ENCODE measurements at regions of chr5 and their contacts with region 1.

Region 1: DNA sequence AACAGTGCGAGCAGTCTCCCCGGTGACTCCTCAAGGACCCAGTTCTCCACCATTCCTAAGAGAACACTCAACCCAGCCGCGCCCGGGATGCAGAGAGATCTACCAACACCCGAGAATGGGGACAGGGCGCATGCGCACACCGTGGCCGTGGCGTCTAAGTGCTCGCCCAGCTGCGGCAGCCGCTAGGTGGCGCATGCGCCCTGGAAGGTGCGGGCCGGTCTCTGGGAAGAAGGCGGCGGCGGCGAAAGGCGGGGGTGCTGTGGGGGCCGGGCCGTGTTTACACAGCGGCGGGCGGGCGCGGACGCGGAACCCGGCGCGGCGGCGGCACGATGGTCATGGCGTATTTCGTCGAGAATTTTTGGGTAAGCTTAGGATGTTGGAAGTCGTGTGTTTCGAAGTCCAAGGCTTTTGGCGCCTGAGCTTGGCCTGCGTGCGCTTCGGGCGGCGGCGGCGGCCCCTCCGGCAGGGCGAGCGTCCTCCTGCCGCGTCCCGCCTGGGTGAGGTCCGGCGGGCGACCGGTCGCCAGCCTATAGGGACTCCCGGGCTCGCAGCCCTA is at the start of gene FCHO2:
- DNase-seq: peak; percentile 90
- ATAC-seq: peak; percentile 90
- H3K4me3 ChIP-seq: peak within 1 kb of the TSS; percentile 65 to 93 (median 86)
- H3K27ac ChIP-seq: peak within 1 kb of the TSS; percentile 89
- H3K4me1 ChIP-seq: peaks cover 58% of the 10 kb centered on the region
- H3K27me3 ChIP-seq: no peaks in the 10 kb centered on the region; a peak in 1 of 5 replicates
- CTCF ChIP-seq: peak; percentile 96
- EP300 ChIP-seq: no peak
- POLR2A ChIP-seq: peak; percentile 70 to 82
- RAD21 ChIP-seq: peak; percentile 78
- total RNA-seq, gene FCHO2: 11.6 and 12.7 TPM in 2 replicates

Region 2: DNA sequence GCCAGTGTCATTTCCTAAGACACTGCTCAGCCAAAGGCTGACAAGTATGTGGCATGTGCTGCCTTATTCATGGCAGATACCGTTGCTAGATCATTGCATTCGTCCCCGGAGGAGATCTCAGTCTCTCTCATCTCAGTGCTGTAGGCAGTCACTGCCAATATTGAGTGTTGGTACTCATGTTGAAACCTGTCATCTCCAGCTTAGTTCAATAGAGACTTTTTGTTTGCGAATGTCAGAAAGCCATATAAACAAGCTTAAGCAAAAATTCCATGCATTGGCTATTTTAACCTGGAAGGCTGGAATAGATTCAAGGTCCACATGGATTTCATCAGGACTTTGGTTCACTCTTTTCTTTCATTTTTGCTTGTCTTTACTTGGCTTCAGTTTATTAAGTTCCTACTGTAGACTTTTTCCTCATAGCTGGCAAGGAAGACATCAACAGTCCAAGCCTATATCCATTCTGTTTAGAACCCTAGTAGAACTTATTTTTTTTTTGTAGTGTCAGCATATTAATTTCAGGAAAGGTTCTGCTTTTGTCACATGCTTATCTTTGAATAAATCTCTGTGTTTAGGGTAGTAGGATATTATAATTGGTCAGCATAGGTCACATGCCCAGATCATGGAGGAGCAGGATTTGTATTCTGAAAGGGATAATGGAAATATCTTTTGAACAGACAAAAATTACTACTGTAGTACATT is 66.8 kb after region 1 on chr5:
- CTCF ChIA-PET with region 1: no interaction called
- POLR2A ChIA-PET with region 1: interaction called, 3 read pairs
- in situ Hi-C with region 1: no loop called
- intact Hi-C with region 1: loop called (anchors 5 kb)
- DNase-seq: peak; percentile 86
- ATAC-seq: peak; percentile 99
- H3K4me3 ChIP-seq: peak overlapping the region in 1 of 3 experiments; percentile 2; a peak in 1 of 6 replicates
- H3K27ac ChIP-seq: peak overlapping the region; percentile 55
- H3K4me1 ChIP-seq: peaks cover 24% of the 10 kb centered on the region
- H3K27me3 ChIP-seq: no peaks in the 10 kb centered on the region
- CTCF ChIP-seq: no peak
- EP300 ChIP-seq: peak in 1 of 2 experiments; percentile 65; a peak in 2 of 4 replicates
- POLR2A ChIP-seq: no peak
- RAD21 ChIP-seq: no peak